MCF 10A (cell line): ENCODE measurements at regions of chr2 and their contacts with region 1.

Region 1: GRCh38 chr2:157055660-157056199 is 201.8 kb upstream of the GALNT5 start:
- DNase-seq: peak; percentile 40
- H3K4me3 Mint-ChIP-seq: peak overlapping the region; percentile 41
- H3K27ac Mint-ChIP-seq: peak overlapping the region; percentile 80
- H3K4me1 Mint-ChIP-seq: peaks cover 19% of the 10 kb centered on the region
- H3K27me3 Mint-ChIP-seq: no peaks in the 10 kb centered on the region
- CTCF ChIP-seq: peak; percentile 41

Region 2: DNA sequence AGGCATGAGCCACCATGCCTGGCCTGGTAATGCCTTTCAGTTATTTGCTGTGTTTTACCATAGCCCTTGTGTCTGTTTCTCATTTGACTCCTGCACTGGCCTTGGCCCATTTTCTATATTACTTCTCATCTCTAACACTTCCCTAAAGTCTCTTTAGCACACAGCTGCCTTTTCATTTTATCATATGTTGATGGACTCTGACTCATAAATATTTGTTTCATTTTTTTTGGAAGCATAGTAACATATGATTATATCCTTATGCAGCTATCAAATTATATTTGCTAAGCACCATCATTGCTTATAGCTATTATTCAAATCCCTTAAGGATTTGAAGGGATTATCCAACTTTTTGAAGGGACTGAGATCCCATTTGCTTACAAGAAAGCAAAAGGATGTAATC is 299.2 kb before region 1 on chr2:
- CTCF ChIA-PET with region 1: no interaction called
- POLR2A ChIA-PET with region 1: no interaction called
- intact Hi-C with region 1: no loop called
- DNase-seq: no peak
- H3K4me3 Mint-ChIP-seq: no peak overlapping the region
- H3K27ac Mint-ChIP-seq: no peak overlapping the region
- H3K4me1 Mint-ChIP-seq: no peaks in the 10 kb centered on the region
- H3K27me3 Mint-ChIP-seq: no peaks in the 10 kb centered on the region
- CTCF ChIP-seq: no peak

Region 3: DNA sequence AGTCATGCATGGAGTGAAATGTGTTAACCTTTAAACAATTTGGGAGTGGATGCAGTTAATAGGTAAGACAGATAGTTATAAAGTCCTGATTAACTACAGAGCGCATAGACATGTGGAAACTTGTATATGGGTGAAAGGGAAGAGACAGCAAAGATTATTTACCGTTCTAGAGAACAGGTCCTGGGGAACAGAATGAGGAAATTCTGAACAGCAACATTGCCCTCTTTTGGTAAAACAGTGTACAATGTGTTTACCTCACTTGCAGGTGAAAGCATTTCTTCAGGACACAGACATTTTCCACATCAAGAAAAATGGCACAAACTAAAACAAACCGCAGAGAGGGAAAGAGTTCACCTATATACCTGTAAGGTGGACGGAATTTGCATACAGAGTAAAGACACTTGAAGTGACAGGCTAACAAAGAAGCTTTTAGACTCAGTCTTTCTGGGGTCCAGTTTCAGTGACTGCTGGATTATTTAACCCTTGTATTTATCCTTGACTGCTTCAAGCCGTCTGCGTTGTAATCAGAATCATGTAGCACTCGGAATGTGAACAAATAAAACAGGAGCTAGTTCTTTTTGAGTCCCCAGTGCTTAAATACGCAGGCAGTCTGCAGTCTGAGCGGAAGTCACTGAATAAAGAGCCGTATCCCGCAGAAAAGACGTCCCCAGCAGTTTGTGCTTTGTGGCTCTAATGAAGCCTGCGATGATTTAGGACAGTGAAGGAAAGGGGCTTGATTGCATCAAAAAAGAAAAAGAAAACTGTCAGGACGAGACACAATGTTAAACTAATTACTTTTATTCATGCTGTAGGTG is 163.1 kb before region 1 on chr2:
- CTCF ChIA-PET with region 1: interaction called, 4 read pairs
- POLR2A ChIA-PET with region 1: no interaction called
- intact Hi-C with region 1: loop called (anchors 2 kb)
- DNase-seq: peak; percentile 80
- H3K4me3 Mint-ChIP-seq: peak overlapping the region; percentile 69
- H3K27ac Mint-ChIP-seq: peak overlapping the region; percentile 6
- H3K4me1 Mint-ChIP-seq: peaks cover 20% of the 10 kb centered on the region
- H3K27me3 Mint-ChIP-seq: no peaks in the 10 kb centered on the region
- CTCF ChIP-seq: peak; percentile 39

Region 4: GRCh38 chr2:157173740-157174184 is 118.0 kb after region 1 on chr2:
- CTCF ChIA-PET with region 1: no interaction called
- POLR2A ChIA-PET with region 1: interaction called, 4 read pairs
- intact Hi-C with region 1: loop called (anchors 5 kb)
- DNase-seq: peak; percentile 99
- H3K4me3 Mint-ChIP-seq: peak overlapping the region; percentile 43
- H3K27ac Mint-ChIP-seq: peak overlapping the region; percentile 92
- H3K4me1 Mint-ChIP-seq: peaks cover 29% of the 10 kb centered on the region
- H3K27me3 Mint-ChIP-seq: no peaks in the 10 kb centered on the region
- CTCF ChIP-seq: no peak